Sigmoid colon (tissue), 7 donors: ENCODE measurements at regions of chr20 and their contacts with region 1.

Region 1: GRCh38 chr20:58481481-58482021 is 33.6 kb downstream of the APCDD1L start:
- DNase-seq: no peak
- H3K4me3 ChIP-seq: no peak overlapping the region
- H3K27ac ChIP-seq: peak overlapping the region in 3 of 4 donors; percentile 77 to 81 (median 78)
- H3K4me1 ChIP-seq: peaks cover 0 to 23% (median 22%) of the 10 kb centered on the region in 4 donors
- H3K27me3 ChIP-seq: no peaks in the 10 kb centered on the region
- CTCF ChIP-seq: peak; percentile 42 to 69 (median 60)
- EP300 ChIP-seq: no peak
- POLR2A ChIP-seq: no peak

Region 2: GRCh38 chr20:58202044-58202443 is 279.5 kb before region 1 on chr20:
- intact Hi-C with region 1: no loop called
- DNase-seq: no peak
- H3K4me3 ChIP-seq: no peak overlapping the region
- H3K27ac ChIP-seq: no peak overlapping the region
- H3K4me1 ChIP-seq: no peaks in the 10 kb centered on the region
- H3K27me3 ChIP-seq: no peaks in the 10 kb centered on the region
- CTCF ChIP-seq: no peak
- EP300 ChIP-seq: no peak
- POLR2A ChIP-seq: no peak

Region 3: GRCh38 chr20:58571693-58572427 is 90.3 kb after region 1 on chr20:
- intact Hi-C with region 1: loop called (anchors 5 kb)
- DNase-seq: peak; percentile 76
- H3K4me3 ChIP-seq: no peak overlapping the region
- H3K27ac ChIP-seq: peak overlapping the region; percentile 31 to 88 (median 79)
- H3K4me1 ChIP-seq: peaks cover 2 to 59% (median 51%) of the 10 kb centered on the region in 4 donors
- H3K27me3 ChIP-seq: no peaks in the 10 kb centered on the region
- CTCF ChIP-seq: no peak
- EP300 ChIP-seq: peak in 3 of 4 donors; percentile 33 to 73 (median 52)
- POLR2A ChIP-seq: no peak